ENCODE measurements at regions of chr1 and their contacts with region 1.

Region 1: GRCh38 chr1:213122514-213122929 is 71.5 kb downstream of the RPS6KC1 start:
- DNase-seq: peak; percentile 89
- ATAC-seq: no peak
- H3K4me3 ChIP-seq: no peak overlapping the region
- H3K27ac ChIP-seq: no peak overlapping the region
- H3K4me1 ChIP-seq: peaks cover 62% of the 10 kb centered on the region
- H3K27me3 ChIP-seq: no peaks in the 10 kb centered on the region
- CTCF ChIP-seq: peak; percentile 74

Region 2: DNA sequence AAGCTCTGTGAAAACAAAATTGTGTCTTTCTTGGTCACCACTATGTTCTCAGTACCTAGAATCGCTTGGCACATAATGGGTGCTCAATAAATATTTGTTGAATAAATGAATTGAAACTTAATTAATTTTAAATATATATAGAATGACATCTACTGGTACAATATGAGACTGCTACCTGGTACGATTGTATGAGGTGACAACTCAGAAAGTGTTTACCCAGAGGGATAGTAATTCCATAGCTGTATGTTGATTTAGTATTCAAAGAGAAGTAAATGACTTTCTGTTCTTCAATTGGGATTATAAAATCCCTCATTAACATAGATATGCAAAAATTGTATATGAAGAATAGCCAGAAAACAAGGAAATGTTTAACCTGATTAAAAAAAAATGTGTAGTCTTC is 57.3 kb after region 1 on chr1:
- CTCF ChIA-PET with region 1: no interaction called
- POLR2A ChIA-PET with region 1: interaction called, 7 read pairs
- intact Hi-C with region 1: loop called (anchors 2 kb)
- DNase-seq: peak; percentile 29
- ATAC-seq: peak; percentile 71
- H3K4me3 ChIP-seq: no peak overlapping the region
- H3K27ac ChIP-seq: no peak overlapping the region
- H3K4me1 ChIP-seq: no peaks in the 10 kb centered on the region
- H3K27me3 ChIP-seq: 0 out of 2 replicates have a peak, but pooled peaks cover 4% of the 10 kb centered on the region
- CTCF ChIP-seq: peak; percentile 21; the same call in 1 of the 2 replicates

Region 3: DNA sequence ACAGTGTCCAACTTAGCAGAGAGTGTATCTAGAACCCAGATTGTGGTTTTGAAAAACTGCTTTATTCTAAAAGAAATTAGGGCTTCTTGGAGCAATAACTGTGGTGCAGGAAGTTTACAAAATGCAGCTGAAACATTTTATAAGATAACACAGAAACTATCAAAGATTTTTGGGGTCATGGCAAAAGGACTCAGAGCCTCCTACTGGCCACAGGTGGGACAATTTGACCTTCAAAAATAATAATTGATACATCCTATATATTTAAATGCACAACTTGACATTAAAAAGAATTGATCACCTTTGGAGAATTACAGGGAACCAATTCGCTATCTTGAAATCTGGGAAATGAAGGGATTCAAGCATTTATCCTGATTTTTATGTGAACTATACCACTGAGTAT is 163.7 kb after region 1 on chr1:
- CTCF ChIA-PET with region 1: no interaction called
- POLR2A ChIA-PET with region 1: no interaction called
- intact Hi-C with region 1: loop called (anchors 5 kb)
- DNase-seq: peak; percentile 23
- ATAC-seq: no peak
- H3K4me3 ChIP-seq: no peak overlapping the region
- H3K27ac ChIP-seq: no peak overlapping the region
- H3K4me1 ChIP-seq: peaks cover 13% of the 10 kb centered on the region; the same call in 1 of the 2 replicates
- H3K27me3 ChIP-seq: no peaks in the 10 kb centered on the region
- CTCF ChIP-seq: peak; percentile 73

Region 4: GRCh38 chr1:214018386-214019268 is 896.1 kb after region 1 on chr1:
- CTCF ChIA-PET with region 1: no interaction called
- POLR2A ChIA-PET with region 1: no interaction called
- intact Hi-C with region 1: loop called (anchors 10 kb)
- DNase-seq: no peak
- ATAC-seq: no peak
- H3K4me3 ChIP-seq: no peak overlapping the region
- H3K27ac ChIP-seq: no peak overlapping the region
- H3K4me1 ChIP-seq: no peaks in the 10 kb centered on the region
- H3K27me3 ChIP-seq: peaks cover 86% of the 10 kb centered on the region
- CTCF ChIP-seq: no peak